CD4-positive, alpha-beta T cell (primary cell): ENCODE measurements at regions of chr1 and their contacts with region 1.

Region 1: GRCh38 chr1:160629286-160630210 is 17.3 kb downstream of the SLAMF1 start:
- DNase-seq: peak; percentile 64 to 94 (median 74)
- ATAC-seq: peak; percentile 82
- H3K4me3 ChIP-seq: peak overlapping the region; percentile 27
- H3K4me3 Mint-ChIP-seq: peak overlapping the region; percentile 84
- H3K27ac ChIP-seq: peak overlapping the region; percentile 90 to 93
- H3K27ac Mint-ChIP-seq: peak overlapping the region; percentile 97
- H3K4me1 ChIP-seq: peaks cover 96% of the 10 kb centered on the region
- H3K4me1 Mint-ChIP-seq: peaks cover 100% of the 10 kb centered on the region
- H3K27me3 ChIP-seq: no peaks in the 10 kb centered on the region
- H3K27me3 Mint-ChIP-seq: no peaks in the 10 kb centered on the region
- CTCF ChIP-seq: no peak

Region 2: DNA sequence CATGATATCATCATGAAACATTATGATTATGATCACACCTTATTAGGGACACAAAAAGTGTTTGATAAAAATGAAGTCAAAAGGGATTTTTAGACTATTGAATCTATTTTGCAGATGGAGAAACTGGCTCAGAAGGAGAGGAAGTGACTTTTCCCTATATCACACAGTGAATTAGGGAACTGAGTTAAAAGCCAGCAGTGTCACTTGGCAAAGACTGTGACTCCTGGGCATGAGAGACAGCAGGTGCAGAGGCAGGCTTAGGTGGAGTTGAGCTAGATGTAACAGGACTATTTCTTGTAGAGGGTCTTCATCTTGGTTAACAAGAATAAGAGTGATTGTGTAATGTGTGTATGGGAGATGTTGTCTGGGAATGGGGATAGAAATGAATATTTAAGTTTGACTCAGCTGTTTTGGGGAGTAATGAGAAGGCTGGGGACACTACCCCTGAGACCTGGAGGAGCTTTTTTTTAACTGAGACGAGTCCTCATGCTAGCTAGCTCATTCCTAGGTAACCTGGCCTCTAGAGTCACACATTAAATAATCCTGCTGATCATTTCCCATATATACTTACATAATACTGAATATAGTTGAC is 49.2 kb before region 1 on chr1:
- CTCF ChIA-PET with region 1: no interaction called
- POLR2A ChIA-PET with region 1: no interaction called
- intact Hi-C with region 1: no loop called
- DNase-seq: no peak
- ATAC-seq: no peak
- H3K4me3 ChIP-seq: no peak overlapping the region
- H3K4me3 Mint-ChIP-seq: peak overlapping the region; percentile 63
- H3K27ac ChIP-seq: peak overlapping the region; percentile 48 to 71
- H3K27ac Mint-ChIP-seq: peak overlapping the region; percentile 87
- H3K4me1 ChIP-seq: peaks cover 34% of the 10 kb centered on the region
- H3K4me1 Mint-ChIP-seq: peaks cover 95% of the 10 kb centered on the region
- H3K27me3 ChIP-seq: no peaks in the 10 kb centered on the region
- H3K27me3 Mint-ChIP-seq: no peaks in the 10 kb centered on the region
- CTCF ChIP-seq: no peak

Region 3: GRCh38 chr1:160618763-160619274 is 10.7 kb before region 1 on chr1:
- CTCF ChIA-PET with region 1: interaction called, 9 read pairs
- POLR2A ChIA-PET with region 1: interaction called, 18 read pairs
- intact Hi-C with region 1: loop called in 1 of 2 experiments (anchors 1 kb)
- DNase-seq: peak in 8 of 14 experiments; percentile 19 to 79 (median 44)
- ATAC-seq: peak; percentile 67
- H3K4me3 ChIP-seq: no peak overlapping the region
- H3K4me3 Mint-ChIP-seq: no peak overlapping the region
- H3K27ac ChIP-seq: no peak overlapping the region
- H3K27ac Mint-ChIP-seq: peak overlapping the region; percentile 42
- H3K4me1 ChIP-seq: peaks cover 44% of the 10 kb centered on the region
- H3K4me1 Mint-ChIP-seq: peaks cover 84% of the 10 kb centered on the region
- H3K27me3 ChIP-seq: no peaks in the 10 kb centered on the region
- H3K27me3 Mint-ChIP-seq: no peaks in the 10 kb centered on the region
- CTCF ChIP-seq: peak; percentile 80

Region 4: GRCh38 chr1:160646711-160647328 is 17.3 kb after region 1 on chr1 and contains the start of gene SLAMF1:
- CTCF ChIA-PET with region 1: interaction called, 3 read pairs
- POLR2A ChIA-PET with region 1: interaction called, 74 read pairs
- intact Hi-C with region 1: loop called in 1 of 2 experiments (anchors 2 kb)
- DNase-seq: peak in 6 of 14 experiments; percentile 22 to 78 (median 66)
- ATAC-seq: peak; percentile 77
- H3K4me3 ChIP-seq: peak within 1 kb of the TSS; percentile 69
- H3K4me3 Mint-ChIP-seq: peak within 1 kb of the TSS; percentile 97
- H3K27ac ChIP-seq: peak within 1 kb of the TSS; percentile 68 to 76
- H3K27ac Mint-ChIP-seq: peak within 1 kb of the TSS; percentile 97
- H3K4me1 ChIP-seq: peaks cover 36% of the 10 kb centered on the region
- H3K4me1 Mint-ChIP-seq: peaks cover 78% of the 10 kb centered on the region
- H3K27me3 ChIP-seq: no peaks in the 10 kb centered on the region
- H3K27me3 Mint-ChIP-seq: no peaks in the 10 kb centered on the region
- CTCF ChIP-seq: no peak
- total RNA-seq, gene SLAMF1: 39.4 to 39.8 TPM

Region 5: GRCh38 chr1:160664573-160665051 is 35.1 kb after region 1 on chr1:
- CTCF ChIA-PET with region 1: interaction called, 3 read pairs
- POLR2A ChIA-PET with region 1: interaction called, 15 read pairs
- intact Hi-C with region 1: no loop called
- DNase-seq: peak in 4 of 14 experiments; percentile 53 to 84 (median 74)
- ATAC-seq: peak; percentile 83
- H3K4me3 ChIP-seq: peak overlapping the region; percentile 13
- H3K4me3 Mint-ChIP-seq: peak overlapping the region; percentile 64
- H3K27ac ChIP-seq: peak overlapping the region; percentile 37 to 79
- H3K27ac Mint-ChIP-seq: peak overlapping the region; percentile 78
- H3K4me1 ChIP-seq: peaks cover 45% of the 10 kb centered on the region
- H3K4me1 Mint-ChIP-seq: peaks cover 74% of the 10 kb centered on the region
- H3K27me3 ChIP-seq: no peaks in the 10 kb centered on the region
- H3K27me3 Mint-ChIP-seq: no peaks in the 10 kb centered on the region
- CTCF ChIP-seq: no peak

Region 6: GRCh38 chr1:160711602-160712311 is 82.2 kb after region 1 on chr1 and contains the start of gene CD48:
- CTCF ChIA-PET with region 1: no interaction called
- POLR2A ChIA-PET with region 1: interaction called, 5 read pairs
- intact Hi-C with region 1: loop called in 1 of 2 experiments (anchors 5 kb)
- DNase-seq: peak in 11 of 14 experiments; percentile 26 to 88 (median 50)
- ATAC-seq: peak; percentile 52
- H3K4me3 ChIP-seq: peak within 1 kb of the TSS; percentile 73
- H3K4me3 Mint-ChIP-seq: no peak within 1 kb of the TSS
- H3K27ac ChIP-seq: peak within 1 kb of the TSS; percentile 86 to 93
- H3K27ac Mint-ChIP-seq: no peak within 1 kb of the TSS
- H3K4me1 ChIP-seq: peaks cover 52% of the 10 kb centered on the region
- H3K4me1 Mint-ChIP-seq: peaks cover 50% of the 10 kb centered on the region
- H3K27me3 ChIP-seq: no peaks in the 10 kb centered on the region
- H3K27me3 Mint-ChIP-seq: no peaks in the 10 kb centered on the region
- CTCF ChIP-seq: no peak
- total RNA-seq, gene CD48: 387 to 395 TPM

Region 7: GRCh38 chr1:160779626-160780397 is 150.3 kb after region 1 on chr1:
- CTCF ChIA-PET with region 1: no interaction called
- POLR2A ChIA-PET with region 1: no interaction called
- intact Hi-C with region 1: no loop called
- DNase-seq: peak in 9 of 14 experiments; percentile 21 to 68 (median 33)
- ATAC-seq: peak; percentile 40
- H3K4me3 ChIP-seq: no peak overlapping the region
- H3K4me3 Mint-ChIP-seq: no peak overlapping the region
- H3K27ac ChIP-seq: no peak overlapping the region
- H3K27ac Mint-ChIP-seq: no peak overlapping the region
- H3K4me1 ChIP-seq: peaks cover 33% of the 10 kb centered on the region
- H3K4me1 Mint-ChIP-seq: peaks cover 29% of the 10 kb centered on the region
- H3K27me3 ChIP-seq: no peaks in the 10 kb centered on the region
- H3K27me3 Mint-ChIP-seq: no peaks in the 10 kb centered on the region
- CTCF ChIP-seq: peak; percentile 62